ENCODE measurements at regions of chr3 and their contacts with region 1.

Region 1: GRCh38 chr3:111967651-111968274 is 11.1 kb upstream of the ABHD10 start:
- DNase-seq: peak; percentile 87 to 91
- H3K4me3 ChIP-seq: no peak overlapping the region
- H3K27ac ChIP-seq: peak overlapping the region; percentile 14 to 56
- H3K4me1 ChIP-seq: peaks cover 0 to 40% (median 12%) of the 10 kb centered on the region in 4 donors
- H3K27me3 ChIP-seq: no peaks in the 10 kb centered on the region
- CTCF ChIP-seq: peak; percentile 85 to 89

Region 2: DNA sequence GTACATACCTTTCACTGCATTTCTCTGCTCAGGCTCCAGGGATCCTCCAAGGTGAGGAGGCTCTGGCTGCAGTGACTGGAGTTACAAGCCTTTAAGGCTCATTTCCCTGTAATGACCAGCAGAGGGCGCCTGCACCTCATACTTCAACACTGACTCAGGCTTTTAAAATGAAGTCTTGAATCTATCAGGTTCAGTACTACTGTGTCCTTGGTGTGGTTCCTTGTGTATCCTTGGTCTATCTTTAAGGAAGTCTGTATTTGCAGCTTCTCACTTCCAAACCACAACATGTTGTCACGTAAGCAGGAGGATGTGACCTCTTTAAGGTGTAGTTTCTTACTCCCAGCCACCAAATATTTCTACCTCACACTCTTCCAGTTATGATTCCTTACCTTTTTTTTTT is 250.2 kb before region 1 on chr3:
- intact Hi-C with region 1: loop called (anchors 2 kb)
- DNase-seq: peak; percentile 82 to 86
- H3K4me3 ChIP-seq: no peak overlapping the region
- H3K27ac ChIP-seq: peak overlapping the region; percentile 7 to 35
- H3K4me1 ChIP-seq: peaks cover 0 to 28% (median 10%) of the 10 kb centered on the region in 4 donors
- H3K27me3 ChIP-seq: no peaks in the 10 kb centered on the region
- CTCF ChIP-seq: peak; percentile 88 to 95

Region 3: GRCh38 chr3:111747490-111747889 is 220.3 kb before region 1 on chr3:
- intact Hi-C with region 1: no loop called
- DNase-seq: no peak
- H3K4me3 ChIP-seq: no peak overlapping the region
- H3K27ac ChIP-seq: no peak overlapping the region
- H3K4me1 ChIP-seq: peaks cover 0 to 26% (median 7%) of the 10 kb centered on the region in 4 donors
- H3K27me3 ChIP-seq: no peaks in the 10 kb centered on the region
- CTCF ChIP-seq: no peak

Region 4: DNA sequence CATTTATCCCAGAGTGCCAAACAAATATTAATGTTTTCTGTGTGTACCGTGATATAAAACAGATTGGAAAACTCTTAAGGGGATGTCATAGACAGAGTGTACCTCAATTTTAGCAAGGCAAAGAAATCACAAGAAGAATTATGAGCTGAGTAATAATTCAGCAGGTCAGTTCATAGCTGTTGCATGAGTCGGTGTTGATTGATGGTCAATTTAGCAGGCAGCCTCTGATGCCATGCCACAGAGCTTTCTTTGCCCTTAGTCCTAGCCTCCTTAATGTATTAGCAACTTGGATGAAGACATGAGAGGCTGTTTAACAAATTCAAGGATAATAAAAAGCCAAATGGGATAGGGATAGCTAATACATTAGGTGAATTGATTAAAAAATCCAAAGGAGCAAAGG is 600.9 kb after region 1 on chr3:
- intact Hi-C with region 1: no loop called
- DNase-seq: no peak
- H3K4me3 ChIP-seq: no peak overlapping the region
- H3K27ac ChIP-seq: no peak overlapping the region
- H3K4me1 ChIP-seq: peaks cover 0 to 5% (median 4%) of the 10 kb centered on the region in 4 donors
- H3K27me3 ChIP-seq: no peaks in the 10 kb centered on the region
- CTCF ChIP-seq: no peak

Measured in tibial artery (tissue), 4 donors.